Aorta (tissue), 5 donors: ENCODE measurements at regions of chr18 and their contacts with region 1.

Region 1: DNA sequence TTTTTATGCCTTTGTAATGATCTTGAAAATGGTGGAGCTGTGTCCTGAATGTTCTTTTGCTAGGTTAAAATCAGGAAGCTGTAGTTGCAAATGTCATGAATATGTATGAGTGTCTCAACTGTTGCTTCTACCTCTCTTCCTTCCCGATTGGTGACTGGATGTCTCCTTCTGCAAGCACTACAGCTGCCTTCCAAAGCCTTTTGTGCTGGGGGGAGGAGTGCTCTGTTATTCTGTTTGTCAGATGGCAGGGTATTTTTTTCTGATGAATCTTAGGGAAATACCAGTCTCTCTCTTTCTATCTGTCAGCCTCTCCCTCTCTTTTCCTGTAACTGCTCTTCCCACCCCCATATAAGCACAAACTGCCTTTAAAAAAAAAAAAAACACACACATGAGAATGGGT is 1396.3 kb upstream of the CELF4 start:
- DNase-seq: no peak
- ATAC-seq: no peak
- H3K4me3 ChIP-seq: no peak overlapping the region
- H3K27ac ChIP-seq: no peak overlapping the region
- H3K4me1 ChIP-seq: no peaks in the 10 kb centered on the region
- H3K27me3 ChIP-seq: no peaks in the 10 kb centered on the region

Region 2: GRCh38 chr18:38951633-38952032 is 10.2 kb before region 1 on chr18:
- intact Hi-C with region 1: loop called in 1 of 2 experiments (anchors 1 kb)
- DNase-seq: no peak
- ATAC-seq: no peak
- H3K4me3 ChIP-seq: no peak overlapping the region
- H3K27ac ChIP-seq: no peak overlapping the region
- H3K4me1 ChIP-seq: no peaks in the 10 kb centered on the region
- H3K27me3 ChIP-seq: no peaks in the 10 kb centered on the region